ENCODE measurements at regions of chr11 and their contacts with region 1.

Region 1: GRCh38 chr11:62753736-62754603 is at the start of gene ZBTB3:
- DNase-seq: peak; percentile 91
- ATAC-seq: peak; percentile 93
- H3K4me3 Mint-ChIP-seq: peak within 1 kb of the TSS; percentile 97
- H3K27ac Mint-ChIP-seq: peak within 1 kb of the TSS; percentile 99
- H3K4me1 Mint-ChIP-seq: peaks cover 22% of the 10 kb centered on the region
- H3K27me3 Mint-ChIP-seq: no peaks in the 10 kb centered on the region
- CTCF ChIP-seq: no peak
- total RNA-seq, gene ZBTB3: 17.6 and 19.9 TPM in 2 replicates

Region 2: GRCh38 chr11:62601394-62602140 is 152.4 kb before region 1 on chr11 and contains the start of gene MTA2:
- CTCF ChIA-PET with region 1: no interaction called
- POLR2A ChIA-PET with region 1: interaction called, 14 read pairs
- intact Hi-C with region 1: no loop called
- DNase-seq: peak; percentile 100
- ATAC-seq: peak; percentile 81
- H3K4me3 Mint-ChIP-seq: peak within 1 kb of the TSS; percentile 92
- H3K27ac Mint-ChIP-seq: peak within 1 kb of the TSS; percentile 97
- H3K4me1 Mint-ChIP-seq: peaks cover 45% of the 10 kb centered on the region
- H3K27me3 Mint-ChIP-seq: no peaks in the 10 kb centered on the region
- CTCF ChIP-seq: no peak
- total RNA-seq, gene MTA2: 170 and 175 TPM in 2 replicates

Region 3: DNA sequence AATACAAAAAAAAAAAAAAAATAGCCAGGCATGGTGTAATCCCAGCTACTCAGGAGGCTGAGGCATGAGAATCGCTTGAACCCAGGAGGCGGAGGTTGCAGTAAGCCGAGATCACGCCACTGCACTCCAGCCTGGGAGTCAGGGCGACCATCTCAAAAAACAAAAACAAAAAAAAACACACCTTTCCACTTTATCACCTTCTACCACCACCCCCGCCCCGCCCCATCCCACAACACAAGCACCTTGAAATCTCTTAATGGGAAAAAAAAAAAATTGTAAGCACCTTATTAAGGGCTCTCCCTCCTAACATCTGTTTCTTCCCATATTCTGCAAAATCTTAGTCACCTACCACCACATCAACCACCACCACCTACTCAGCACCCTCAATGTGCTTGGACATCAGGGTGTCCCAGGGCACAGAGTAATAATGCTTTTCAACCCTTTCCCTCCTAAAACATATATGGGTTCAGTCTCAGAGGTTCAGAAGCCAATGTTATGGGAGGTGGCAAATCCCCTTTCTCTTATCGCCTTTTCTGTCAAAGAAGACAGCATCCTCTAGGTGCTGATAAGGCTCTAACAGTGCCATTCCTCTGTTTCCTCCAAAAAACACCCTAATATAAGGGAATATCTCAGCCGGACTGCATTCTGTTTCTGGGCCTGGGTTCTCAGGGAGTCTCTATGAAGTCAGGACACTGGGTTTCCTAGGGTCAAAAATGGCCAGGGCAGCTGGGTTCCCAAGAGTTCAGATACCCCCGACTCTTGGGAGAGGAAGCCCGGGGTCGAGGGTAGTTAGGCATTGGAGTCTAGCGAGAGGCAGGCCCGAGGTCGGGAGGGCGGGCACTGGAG is 101.6 kb before region 1 on chr11:
- CTCF ChIA-PET with region 1: no interaction called
- POLR2A ChIA-PET with region 1: interaction called, 11 read pairs
- intact Hi-C with region 1: no loop called
- DNase-seq: no peak
- ATAC-seq: no peak
- H3K4me3 Mint-ChIP-seq: peak overlapping the region; percentile 90
- H3K27ac Mint-ChIP-seq: peak overlapping the region; percentile 90
- H3K4me1 Mint-ChIP-seq: peaks cover 28% of the 10 kb centered on the region
- H3K27me3 Mint-ChIP-seq: no peaks in the 10 kb centered on the region
- CTCF ChIP-seq: no peak

Region 4: DNA sequence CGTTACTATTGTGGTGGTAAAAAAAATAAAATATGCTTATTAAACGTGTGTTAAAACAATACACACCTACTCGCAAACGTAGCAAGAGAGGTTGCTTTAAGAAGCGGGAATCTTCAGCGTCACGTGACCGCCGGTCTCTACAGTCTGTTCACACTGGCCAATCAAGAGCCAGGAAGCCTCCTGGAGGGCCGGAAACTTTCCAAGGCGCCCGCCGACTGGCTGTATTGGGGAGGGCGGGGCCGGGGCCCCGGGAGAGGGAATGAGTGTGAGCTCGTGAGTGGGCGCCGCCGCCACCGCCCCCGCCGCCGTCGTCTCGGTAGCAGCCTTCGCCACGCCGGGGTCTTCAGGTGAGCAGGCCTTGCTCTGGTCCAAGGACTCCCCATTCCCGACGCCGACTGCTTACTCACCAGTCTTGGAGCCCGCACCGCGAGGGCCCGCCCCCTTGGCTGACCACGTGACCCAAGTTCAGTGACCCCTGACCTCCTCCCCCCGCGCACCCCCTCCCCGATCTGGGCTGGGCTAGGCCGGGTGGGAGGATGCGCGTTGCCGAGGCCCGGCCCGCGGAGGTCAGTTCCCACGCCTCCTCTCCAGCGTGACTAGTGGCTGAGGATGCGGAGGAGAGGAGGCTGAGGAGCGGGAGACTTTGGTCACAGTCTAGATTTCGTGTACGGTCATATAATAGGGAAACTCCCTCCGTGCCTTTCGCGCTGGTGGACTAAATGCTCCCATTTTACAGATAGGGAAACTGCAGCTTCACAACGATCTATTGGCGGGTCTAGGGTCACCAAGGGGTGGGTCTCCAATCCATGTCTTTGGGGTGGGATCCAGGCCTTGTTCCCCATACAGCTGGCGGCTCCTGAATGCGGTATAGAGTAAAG is 17.4 kb after region 1 on chr11 and contains the start of gene TAF6L:
- CTCF ChIA-PET with region 1: interaction called, 7 read pairs
- POLR2A ChIA-PET with region 1: interaction called, 109 read pairs
- intact Hi-C with region 1: loop called (anchors 1 kb)
- DNase-seq: peak; percentile 81
- ATAC-seq: peak; percentile 88
- H3K4me3 Mint-ChIP-seq: peak within 1 kb of the TSS; percentile 92
- H3K27ac Mint-ChIP-seq: peak within 1 kb of the TSS; percentile 94
- H3K4me1 Mint-ChIP-seq: peaks cover 28% of the 10 kb centered on the region
- H3K27me3 Mint-ChIP-seq: no peaks in the 10 kb centered on the region
- CTCF ChIP-seq: no peak
- total RNA-seq, gene TAF6L: 32.9 and 38.6 TPM in 2 replicates

Region 5: DNA sequence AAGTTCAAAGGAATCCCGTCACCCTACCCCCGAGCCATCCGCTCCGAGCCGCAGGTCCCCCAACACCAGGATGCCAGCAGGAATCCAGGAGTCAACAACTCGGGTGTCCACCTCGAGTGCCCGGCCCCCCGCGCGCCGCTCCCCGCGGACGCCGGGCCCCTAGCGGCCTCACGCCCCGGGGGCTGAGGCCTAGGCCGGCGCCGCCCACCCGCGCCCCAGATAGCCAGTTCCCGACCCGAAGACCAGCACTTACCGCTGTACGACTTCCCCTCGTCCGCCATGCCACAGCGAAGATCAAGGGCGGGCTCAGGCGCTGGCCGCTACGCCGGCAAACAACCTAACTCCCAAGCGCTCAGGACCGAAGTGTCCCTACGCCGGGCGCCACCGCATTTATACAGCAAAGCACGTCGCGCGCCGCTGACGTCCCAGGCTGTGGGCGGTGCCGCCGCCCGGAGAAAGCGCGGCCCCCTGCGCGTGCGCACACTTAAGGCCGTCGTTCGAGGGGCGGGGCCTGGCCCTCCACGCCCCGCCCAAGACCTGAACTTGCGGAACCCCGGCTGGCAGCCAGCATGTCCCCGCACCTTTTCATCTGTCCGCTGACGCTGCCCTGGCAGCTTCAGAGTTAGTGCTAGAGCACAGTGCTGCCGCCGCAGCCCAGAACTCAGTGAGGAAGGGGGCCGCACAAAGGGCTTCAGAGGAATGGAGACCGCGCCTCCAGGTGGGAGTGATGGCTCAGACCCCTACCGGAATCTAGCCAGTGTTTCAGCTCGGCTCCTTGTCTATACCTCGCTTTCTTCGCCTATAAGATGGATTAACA is 51.3 kb after region 1 on chr11 and contains the start of gene NXF1:
- CTCF ChIA-PET with region 1: no interaction called
- POLR2A ChIA-PET with region 1: interaction called, 15 read pairs
- intact Hi-C with region 1: no loop called
- DNase-seq: peak; percentile 99
- ATAC-seq: peak; percentile 86
- H3K4me3 Mint-ChIP-seq: peak within 1 kb of the TSS; percentile 96
- H3K27ac Mint-ChIP-seq: peak within 1 kb of the TSS; percentile 93
- H3K4me1 Mint-ChIP-seq: peaks cover 36% of the 10 kb centered on the region
- H3K27me3 Mint-ChIP-seq: no peaks in the 10 kb centered on the region
- CTCF ChIP-seq: no peak
- total RNA-seq, gene NXF1: 89.1 and 91.6 TPM in 2 replicates

Measured in activated B cell treated with CpG ODN at 0.5 μM for 24 hours (primary cell).